ENCODE measurements at regions of chr7 and their contacts with region 1.

Region 1: GRCh38 chr7:4883374-4884144 is at the start of gene RADIL:
- DNase-seq: peak; percentile 97
- ATAC-seq: peak; percentile 100
- H3K4me3 Mint-ChIP-seq: peak within 1 kb of the TSS; percentile 62
- H3K27ac Mint-ChIP-seq: no peak within 1 kb of the TSS
- H3K4me1 Mint-ChIP-seq: peaks cover 7% of the 10 kb centered on the region
- H3K27me3 Mint-ChIP-seq: peaks cover 17% of the 10 kb centered on the region
- CTCF ChIP-seq: peak; percentile 76
- total RNA-seq, gene RADIL: 0.65 to 0.77 TPM

Region 2: GRCh38 chr7:4325732-4326131 is 557.8 kb before region 1 on chr7:
- CTCF ChIA-PET with region 1: no interaction called
- POLR2A ChIA-PET with region 1: no interaction called
- intact Hi-C with region 1: no loop called
- DNase-seq: no peak
- ATAC-seq: no peak
- H3K4me3 Mint-ChIP-seq: no peak overlapping the region
- H3K27ac Mint-ChIP-seq: no peak overlapping the region
- H3K4me1 Mint-ChIP-seq: no peaks in the 10 kb centered on the region
- H3K27me3 Mint-ChIP-seq: no peaks in the 10 kb centered on the region
- CTCF ChIP-seq: no peak

Region 3: DNA sequence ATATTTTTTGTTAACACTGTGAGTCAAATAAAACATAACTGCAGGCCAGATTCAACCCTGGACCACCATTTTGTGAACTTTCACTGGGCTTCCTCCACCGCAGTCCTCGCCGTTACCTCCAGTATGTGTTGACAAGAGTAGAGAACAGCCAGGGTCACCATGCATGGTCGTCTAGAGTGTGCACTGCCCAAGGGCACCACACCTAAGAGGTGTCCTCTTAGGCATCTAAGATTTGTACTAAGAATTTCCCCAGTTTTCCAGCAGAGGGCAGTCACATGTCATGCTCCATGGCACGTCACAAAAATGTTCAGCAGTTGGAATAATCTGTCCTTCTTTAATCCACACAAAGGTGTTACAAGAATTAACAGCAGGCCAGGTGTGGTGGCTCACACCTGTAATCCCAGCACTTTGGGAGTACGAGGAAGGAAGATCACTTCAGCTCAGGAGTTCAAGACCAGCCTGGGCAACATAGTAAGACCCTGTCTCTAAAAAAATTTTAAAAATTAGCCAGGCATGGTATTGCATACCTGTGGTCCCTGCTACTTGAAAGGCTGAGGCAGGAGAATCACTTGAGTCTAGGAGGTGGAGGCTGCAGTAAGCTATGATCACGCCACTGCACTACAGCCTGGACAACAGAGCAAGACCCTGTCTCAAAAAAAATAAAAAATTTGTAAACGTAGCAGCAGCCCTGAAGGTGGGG is 272.6 kb before region 1 on chr7:
- CTCF ChIA-PET with region 1: no interaction called
- POLR2A ChIA-PET with region 1: no interaction called
- intact Hi-C with region 1: loop called (anchors 10 kb)
- DNase-seq: peak; percentile 61
- ATAC-seq: peak; percentile 82
- H3K4me3 Mint-ChIP-seq: no peak overlapping the region
- H3K27ac Mint-ChIP-seq: no peak overlapping the region
- H3K4me1 Mint-ChIP-seq: peaks cover 10% of the 10 kb centered on the region
- H3K27me3 Mint-ChIP-seq: no peaks in the 10 kb centered on the region
- CTCF ChIP-seq: peak; percentile 87

Region 4: DNA sequence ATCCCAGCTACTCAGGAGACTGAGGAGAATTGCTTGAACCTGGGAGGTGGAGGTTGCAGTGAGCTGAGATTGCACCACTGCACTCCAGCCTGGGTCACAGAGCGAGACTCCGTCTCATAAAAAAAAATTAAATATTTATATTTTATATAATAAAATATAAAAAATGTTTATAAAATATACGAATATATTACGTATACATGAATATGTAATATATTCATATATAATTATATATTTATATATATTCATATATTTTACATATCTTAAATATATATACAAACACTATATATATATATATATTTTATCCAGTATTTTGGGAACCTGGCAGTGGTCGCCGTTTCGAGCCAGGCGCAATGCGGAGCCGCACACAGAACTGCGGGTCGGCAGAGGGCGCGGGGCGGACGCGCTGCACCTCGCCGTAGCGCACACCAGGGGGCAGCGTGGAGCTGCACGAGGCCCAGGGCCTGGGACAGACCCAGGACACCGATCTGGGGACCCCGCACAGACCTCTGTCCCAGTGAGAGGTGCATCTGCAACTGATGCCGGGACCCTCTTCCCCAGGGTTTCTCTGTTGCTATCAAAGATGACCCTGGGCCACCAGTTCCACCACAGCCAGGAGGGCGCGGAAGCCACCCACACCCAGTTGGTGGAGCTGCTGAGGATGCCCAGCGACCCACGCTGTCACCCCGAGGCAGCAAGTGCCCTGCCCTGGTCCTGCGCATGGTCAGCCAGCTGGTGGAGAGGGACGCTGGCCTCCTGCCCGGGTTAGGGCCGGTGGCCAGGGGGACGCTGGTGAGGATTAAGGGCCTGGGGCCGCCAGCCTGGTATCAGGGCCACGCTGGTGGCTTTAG is 85.5 kb before region 1 on chr7:
- CTCF ChIA-PET with region 1: interaction called, 43 read pairs
- POLR2A ChIA-PET with region 1: interaction called, 4 read pairs
- intact Hi-C with region 1: loop called (anchors 10 kb)
- DNase-seq: peak; percentile 68
- ATAC-seq: peak; percentile 100
- H3K4me3 Mint-ChIP-seq: no peak overlapping the region
- H3K27ac Mint-ChIP-seq: no peak overlapping the region
- H3K4me1 Mint-ChIP-seq: no peaks in the 10 kb centered on the region
- H3K27me3 Mint-ChIP-seq: no peaks in the 10 kb centered on the region
- CTCF ChIP-seq: peak; percentile 98

Region 5: DNA sequence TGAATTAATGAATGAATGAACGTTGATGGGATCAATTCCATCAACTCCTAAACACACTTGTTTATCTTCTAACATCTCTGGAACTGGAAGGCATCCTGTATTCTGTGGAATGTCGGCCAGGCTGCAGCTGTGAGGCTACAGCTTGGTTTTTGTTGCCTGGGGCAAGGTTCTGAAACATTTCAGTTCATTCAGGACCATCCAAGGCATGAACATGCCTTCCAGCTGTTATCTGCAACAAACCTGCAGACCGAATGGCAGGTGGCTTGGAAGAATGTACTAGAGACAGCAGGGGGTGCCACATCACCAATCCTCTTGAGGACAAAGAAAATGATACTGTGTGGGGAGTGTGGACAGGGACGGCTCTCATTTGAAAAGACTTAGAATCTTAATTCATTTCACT is 34.2 kb before region 1 on chr7:
- CTCF ChIA-PET with region 1: interaction called, 18 read pairs
- POLR2A ChIA-PET with region 1: no interaction called
- intact Hi-C with region 1: no loop called
- DNase-seq: peak; percentile 61
- ATAC-seq: peak; percentile 62
- H3K4me3 Mint-ChIP-seq: no peak overlapping the region
- H3K27ac Mint-ChIP-seq: no peak overlapping the region
- H3K4me1 Mint-ChIP-seq: peaks cover 11% of the 10 kb centered on the region
- H3K27me3 Mint-ChIP-seq: peaks cover 16% of the 10 kb centered on the region
- CTCF ChIP-seq: peak; percentile 43

Region 6: DNA sequence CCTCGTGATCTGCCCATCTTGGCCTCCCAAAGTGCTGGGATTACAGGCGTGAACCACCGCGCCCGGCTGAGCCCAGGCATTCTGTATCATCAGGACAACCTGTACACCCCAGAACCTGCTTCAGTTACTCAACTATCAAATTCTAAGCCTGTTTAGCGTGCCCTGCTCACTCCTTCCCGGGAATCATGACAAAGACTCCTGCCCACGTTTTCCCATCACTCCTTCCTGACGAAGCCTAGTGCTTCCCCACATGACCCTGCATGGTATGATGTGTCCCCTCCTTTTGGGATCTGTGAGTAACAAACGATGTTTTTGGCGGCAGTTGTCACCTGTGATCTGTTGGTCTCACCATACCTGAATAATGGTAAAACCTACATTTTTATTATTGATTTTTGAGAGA is 12.2 kb after region 1 on chr7:
- CTCF ChIA-PET with region 1: interaction called, 10 read pairs
- POLR2A ChIA-PET with region 1: no interaction called
- intact Hi-C with region 1: no loop called
- DNase-seq: no peak
- ATAC-seq: no peak
- H3K4me3 Mint-ChIP-seq: no peak overlapping the region
- H3K27ac Mint-ChIP-seq: no peak overlapping the region
- H3K4me1 Mint-ChIP-seq: no peaks in the 10 kb centered on the region
- H3K27me3 Mint-ChIP-seq: no peaks in the 10 kb centered on the region
- CTCF ChIP-seq: no peak

Measured in activated CD8-positive, alpha-beta T cell treated with anti-CD3 and anti-CD28 coated beads for 36 hours (primary cell).